Right lobe of liver (tissue), 6 donors: ENCODE measurements at regions of chr11 and their contacts with region 1.

Region 1: DNA sequence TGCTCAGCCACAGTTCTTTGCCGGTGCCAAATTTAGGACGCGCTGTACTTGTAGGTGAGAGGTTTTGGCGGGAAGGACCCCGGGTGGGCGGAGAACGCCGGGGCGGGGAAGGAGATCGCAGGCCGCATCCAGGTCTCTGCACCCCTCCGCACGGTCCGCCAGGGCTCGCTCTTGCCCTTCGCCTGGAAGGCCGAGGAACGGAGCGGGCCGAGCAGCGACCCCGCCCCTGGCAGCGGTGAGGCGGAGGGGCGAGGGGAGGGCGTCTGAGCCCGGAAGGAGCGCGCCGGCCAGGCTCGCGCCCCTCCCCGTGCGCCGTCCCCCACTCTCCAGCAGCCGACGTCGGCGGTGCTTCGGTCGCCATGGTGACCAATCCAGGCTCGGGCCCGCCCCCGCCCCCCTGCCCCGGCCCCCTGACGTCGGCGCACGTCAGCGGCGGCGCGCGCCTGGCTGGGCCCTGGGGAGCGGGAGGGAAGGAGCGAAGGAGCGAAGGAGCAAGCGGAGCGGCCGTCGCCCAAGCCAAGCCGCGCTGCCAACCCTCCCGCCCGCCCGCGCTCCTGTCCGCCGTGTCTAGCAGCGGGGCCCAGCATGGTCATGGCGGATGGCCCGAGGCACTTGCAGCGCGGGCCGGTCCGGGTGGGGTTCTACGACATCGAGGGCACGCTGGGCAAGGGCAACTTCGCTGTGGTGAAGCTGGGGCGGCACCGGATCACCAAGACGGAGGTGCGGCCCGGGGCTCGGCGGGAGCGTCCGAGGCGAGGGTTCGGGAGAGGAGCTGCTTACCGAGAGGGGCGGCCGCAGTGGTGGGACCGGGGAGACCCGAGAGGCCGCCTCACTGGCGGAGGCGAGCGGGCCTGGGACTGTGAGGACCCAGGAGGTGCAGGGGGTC is at the start of gene SIK2:
- DNase-seq: peak; percentile 96 to 97 (median 97)
- ATAC-seq: peak; percentile 85 to 96 (median 90)
- H3K4me3 ChIP-seq: peak within 1 kb of the TSS; percentile 77 to 87 (median 81)
- H3K27ac ChIP-seq: peak within 1 kb of the TSS; percentile 99 to 100 (median 100)
- H3K4me1 ChIP-seq: peaks cover 0 to 33% (median 6%) of the 10 kb centered on the region in 4 donors
- H3K27me3 ChIP-seq: no peaks in the 10 kb centered on the region
- CTCF ChIP-seq: peak; percentile 93 to 95 (median 94)
- POLR2A ChIP-seq: peak; percentile 43
- total RNA-seq, gene SIK2: 15.4 to 39.5 (median 26.4) TPM

Region 2: DNA sequence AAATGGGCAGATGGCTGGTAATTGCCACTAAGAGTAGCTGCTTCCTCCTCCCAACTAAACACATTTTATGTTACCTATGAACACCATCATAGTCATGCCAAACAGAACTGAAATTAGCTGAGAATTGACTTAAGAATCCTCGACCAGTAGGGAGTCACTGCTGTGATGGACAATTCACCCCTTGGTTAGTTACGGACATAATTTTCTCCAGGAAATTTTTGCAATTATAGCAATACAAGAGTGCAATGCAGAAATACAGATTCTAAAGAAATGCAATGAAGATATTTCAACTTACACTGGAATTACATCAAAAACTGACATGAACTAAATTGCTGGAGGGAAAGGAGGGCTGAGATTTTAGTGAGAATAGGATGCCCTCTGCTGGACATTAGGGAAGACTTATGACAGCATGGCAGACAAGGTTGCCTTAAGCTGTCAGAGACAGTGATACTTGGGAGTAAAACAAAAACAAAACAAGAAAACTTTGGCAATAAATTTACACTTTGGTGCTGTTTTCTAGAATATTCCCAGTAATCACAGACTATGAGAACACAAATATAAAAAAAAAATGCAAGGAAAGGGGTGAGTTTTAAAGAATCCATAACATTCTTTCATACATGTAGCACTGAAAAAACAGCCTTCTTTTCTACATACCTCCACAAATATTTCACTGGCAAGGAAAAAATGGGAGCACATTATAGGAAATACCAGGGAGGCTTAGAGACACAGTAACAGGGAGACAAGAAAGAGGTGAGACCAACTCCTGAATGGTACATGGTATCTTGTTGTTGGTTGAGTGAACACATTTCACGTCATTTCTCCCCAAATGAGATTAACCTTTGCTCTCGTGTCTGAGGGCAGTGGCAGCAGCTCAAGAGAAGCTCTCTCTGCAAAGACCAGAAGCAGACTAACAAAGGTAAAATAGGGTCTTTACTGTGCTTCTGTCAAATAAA is 175.1 kb after region 1 on chr11:
- intact Hi-C with region 1: loop called in 1 of 2 experiments (anchors 10 kb)
- DNase-seq: peak in 1 of 3 donors; percentile 79
- ATAC-seq: peak; percentile 70 to 83 (median 76)
- H3K4me3 ChIP-seq: peak overlapping the region in 2 of 3 donors; percentile 18 to 32
- H3K27ac ChIP-seq: peak overlapping the region; percentile 58 to 94 (median 91)
- H3K4me1 ChIP-seq: peaks cover 0 to 66% (median 28%) of the 10 kb centered on the region in 4 donors
- H3K27me3 ChIP-seq: no peaks in the 10 kb centered on the region
- CTCF ChIP-seq: peak; percentile 73 to 85 (median 80)
- POLR2A ChIP-seq: peak; percentile 76